Activated B cell treated with CpG ODN at 0.5 μM for 24 hours (primary cell): ENCODE measurements at regions of chr1 and their contacts with region 1.

Region 1: DNA sequence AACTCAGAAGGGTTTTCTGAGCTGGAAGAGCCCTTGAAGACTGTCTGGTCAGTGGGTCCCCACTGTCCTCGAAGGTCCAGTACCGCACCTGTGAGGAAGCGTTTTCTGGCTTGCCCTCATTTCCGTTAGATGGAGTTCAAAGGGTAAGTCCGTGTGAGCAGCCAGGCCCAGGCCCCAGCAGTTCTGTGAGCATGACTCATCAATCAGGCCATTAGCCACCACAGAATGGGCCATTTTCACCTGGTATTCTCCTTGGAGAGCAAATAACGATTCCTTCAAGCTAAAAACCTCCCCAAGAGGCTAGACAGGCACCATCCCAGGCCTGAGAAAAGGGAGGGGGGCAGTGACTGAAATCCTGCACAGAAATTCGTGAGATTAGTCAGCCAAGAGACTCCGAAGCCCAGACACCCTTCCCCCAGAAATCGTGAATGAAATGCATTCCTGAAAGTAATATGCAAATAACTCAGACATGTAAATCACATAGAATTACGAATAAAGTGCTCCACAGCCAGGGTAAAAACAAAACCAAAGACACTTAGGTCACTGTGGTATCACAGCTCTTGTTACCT is 66.0 kb downstream of the BCAR3 start:
- DNase-seq: no peak
- ATAC-seq: peak; percentile 65
- H3K4me3 Mint-ChIP-seq: peak overlapping the region; percentile 32
- H3K27ac Mint-ChIP-seq: peak overlapping the region; percentile 44
- H3K4me1 Mint-ChIP-seq: peaks cover 85% of the 10 kb centered on the region
- H3K27me3 Mint-ChIP-seq: no peaks in the 10 kb centered on the region
- CTCF ChIP-seq: no peak

Region 2: GRCh38 chr1:93579891-93580290 is 35.8 kb before region 1 on chr1:
- CTCF ChIA-PET with region 1: interaction called, 3 read pairs
- POLR2A ChIA-PET with region 1: no interaction called
- intact Hi-C with region 1: loop called (anchors 5 kb)
- DNase-seq: no peak
- ATAC-seq: no peak
- H3K4me3 Mint-ChIP-seq: no peak overlapping the region
- H3K27ac Mint-ChIP-seq: no peak overlapping the region
- H3K4me1 Mint-ChIP-seq: no peaks in the 10 kb centered on the region
- H3K27me3 Mint-ChIP-seq: no peaks in the 10 kb centered on the region
- CTCF ChIP-seq: no peak